Activated CD8-positive, alpha-beta memory T cell treated with anti-CD3 and anti-CD28 coated beads, Interleukin-2, amount 10 ng/mL, durations not matched to agents 7 days and 5 days (primary cell): ENCODE measurements at regions of chr9 and their contacts with region 1.

Region 1: GRCh38 chr9:21110708-21111576 is 30.7 kb downstream of the IFNW1 start:
- DNase-seq: no peak
- ATAC-seq: peak; percentile 93
- H3K4me3 Mint-ChIP-seq: no peak overlapping the region
- H3K27ac Mint-ChIP-seq: no peak overlapping the region
- H3K4me1 Mint-ChIP-seq: no peaks in the 10 kb centered on the region
- H3K27me3 Mint-ChIP-seq: peaks cover 6% of the 10 kb centered on the region

Region 2: GRCh38 chr9:20622330-20623020 is 488.5 kb before region 1 on chr9 and contains the start of gene MLLT3:
- CTCF ChIA-PET with region 1: interaction called, 16 read pairs
- DNase-seq: peak; percentile 98
- ATAC-seq: peak; percentile 86
- H3K4me3 Mint-ChIP-seq: peak within 1 kb of the TSS; percentile 100
- H3K27ac Mint-ChIP-seq: peak within 1 kb of the TSS; percentile 94
- H3K4me1 Mint-ChIP-seq: peaks cover 37% of the 10 kb centered on the region
- H3K27me3 Mint-ChIP-seq: no peaks in the 10 kb centered on the region
- total RNA-seq, gene MLLT3: 55.9 to 56.4 TPM

Region 3: GRCh38 chr9:20884985-20885593 is 225.9 kb before region 1 on chr9:
- CTCF ChIA-PET with region 1: interaction called, 25 read pairs
- DNase-seq: peak; percentile 73
- ATAC-seq: peak; percentile 66
- H3K4me3 Mint-ChIP-seq: no peak overlapping the region
- H3K27ac Mint-ChIP-seq: no peak overlapping the region
- H3K4me1 Mint-ChIP-seq: no peaks in the 10 kb centered on the region
- H3K27me3 Mint-ChIP-seq: no peaks in the 10 kb centered on the region

Region 4: DNA sequence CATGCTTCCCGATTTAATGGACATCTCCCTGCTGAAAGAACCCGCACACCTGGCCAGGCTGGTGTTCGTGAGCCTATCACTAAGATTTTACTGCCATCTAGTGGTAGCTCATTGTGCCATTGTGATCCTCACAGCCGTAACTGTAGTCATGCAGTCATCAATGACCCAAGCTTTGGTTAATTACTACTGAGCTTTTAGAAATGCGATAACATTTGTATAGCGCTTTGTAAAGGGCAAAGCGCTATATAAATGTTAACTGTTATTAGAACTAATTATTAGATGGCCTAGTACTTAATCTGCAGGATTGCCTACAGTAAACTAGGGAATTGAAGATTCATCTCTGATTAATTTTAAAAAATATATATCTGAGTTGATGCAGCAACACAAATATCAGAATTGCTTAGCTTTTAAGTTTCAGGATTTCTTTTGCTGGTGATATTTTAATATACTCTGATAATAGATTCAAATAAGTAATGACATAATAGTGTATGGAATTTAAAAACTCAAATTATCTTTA is 169.7 kb before region 1 on chr9:
- CTCF ChIA-PET with region 1: interaction called, 23 read pairs
- DNase-seq: peak; percentile 63
- ATAC-seq: peak; percentile 99
- H3K4me3 Mint-ChIP-seq: no peak overlapping the region
- H3K27ac Mint-ChIP-seq: no peak overlapping the region
- H3K4me1 Mint-ChIP-seq: peaks cover 3% of the 10 kb centered on the region
- H3K27me3 Mint-ChIP-seq: no peaks in the 10 kb centered on the region

Region 5: GRCh38 chr9:21053851-21054250 is 57.1 kb before region 1 on chr9:
- CTCF ChIA-PET with region 1: no interaction called
- DNase-seq: no peak
- ATAC-seq: no peak
- H3K4me3 Mint-ChIP-seq: no peak overlapping the region
- H3K27ac Mint-ChIP-seq: no peak overlapping the region
- H3K4me1 Mint-ChIP-seq: no peaks in the 10 kb centered on the region
- H3K27me3 Mint-ChIP-seq: no peaks in the 10 kb centered on the region

Region 6: DNA sequence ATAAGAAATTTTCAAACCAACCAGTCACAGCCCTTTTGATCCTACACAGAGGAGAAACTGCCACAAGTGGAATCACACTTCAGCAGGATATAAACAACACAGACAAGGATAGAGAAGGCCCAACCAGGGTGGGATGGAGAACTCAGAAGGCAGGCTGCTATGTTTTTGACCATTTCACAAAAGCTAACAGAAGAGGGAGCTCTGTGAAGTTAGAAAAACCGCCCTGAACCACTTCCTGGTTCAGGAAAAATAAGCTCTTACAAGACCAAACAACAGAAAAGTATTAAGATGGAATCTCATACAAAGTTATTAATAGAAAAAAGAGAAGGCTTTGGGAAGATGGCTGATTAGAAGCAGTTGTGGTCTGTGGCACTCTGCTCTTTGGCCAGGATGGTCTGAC is 32.2 kb before region 1 on chr9:
- CTCF ChIA-PET with region 1: interaction called, 20 read pairs
- DNase-seq: no peak
- ATAC-seq: peak; percentile 54
- H3K4me3 Mint-ChIP-seq: no peak overlapping the region
- H3K27ac Mint-ChIP-seq: peak overlapping the region; percentile 12
- H3K4me1 Mint-ChIP-seq: peaks cover 27% of the 10 kb centered on the region
- H3K27me3 Mint-ChIP-seq: peaks cover 7% of the 10 kb centered on the region

Region 7: GRCh38 chr9:21096172-21096900 is 14.6 kb before region 1 on chr9:
- CTCF ChIA-PET with region 1: interaction called, 20 read pairs
- DNase-seq: peak; percentile 59
- ATAC-seq: peak; percentile 87
- H3K4me3 Mint-ChIP-seq: peak overlapping the region; percentile 67
- H3K27ac Mint-ChIP-seq: peak overlapping the region; percentile 81
- H3K4me1 Mint-ChIP-seq: peaks cover 35% of the 10 kb centered on the region
- H3K27me3 Mint-ChIP-seq: no peaks in the 10 kb centered on the region